PC-3 (cell line): ENCODE measurements at regions of chr2 and their contacts with region 1.

Region 1: DNA sequence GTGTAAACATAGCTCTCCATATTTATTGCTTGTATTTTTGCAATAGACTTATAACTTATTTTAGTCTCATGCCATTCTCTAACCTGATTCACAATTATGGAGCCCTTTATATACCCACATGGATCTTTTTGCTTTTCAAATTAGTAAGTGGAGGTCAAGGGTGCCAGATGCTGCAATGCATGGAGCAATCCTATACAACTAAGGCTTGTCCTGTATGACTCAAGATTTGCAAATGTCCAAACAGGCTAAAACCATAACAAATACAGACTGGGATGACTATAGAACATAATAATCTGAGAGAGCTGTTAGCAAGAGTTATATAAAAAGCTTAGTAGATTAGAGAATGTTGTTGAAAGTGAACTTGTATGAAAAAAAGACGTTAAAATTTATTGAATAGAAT is 690.4 kb upstream of the NRXN1 start:
- DNase-seq: peak; percentile 58
- ATAC-seq: peak; percentile 60
- H3K4me3 ChIP-seq: no peak overlapping the region
- H3K27ac ChIP-seq: 0 out of 2 replicates have a peak overlapping the region, but pooled peaks have one; percentile 5
- H3K4me1 ChIP-seq: peaks cover 16% of the 10 kb centered on the region; the same call in 1 of the 2 replicates
- H3K27me3 ChIP-seq: no peaks in the 10 kb centered on the region
- CTCF ChIP-seq: no peak

Region 2: DNA sequence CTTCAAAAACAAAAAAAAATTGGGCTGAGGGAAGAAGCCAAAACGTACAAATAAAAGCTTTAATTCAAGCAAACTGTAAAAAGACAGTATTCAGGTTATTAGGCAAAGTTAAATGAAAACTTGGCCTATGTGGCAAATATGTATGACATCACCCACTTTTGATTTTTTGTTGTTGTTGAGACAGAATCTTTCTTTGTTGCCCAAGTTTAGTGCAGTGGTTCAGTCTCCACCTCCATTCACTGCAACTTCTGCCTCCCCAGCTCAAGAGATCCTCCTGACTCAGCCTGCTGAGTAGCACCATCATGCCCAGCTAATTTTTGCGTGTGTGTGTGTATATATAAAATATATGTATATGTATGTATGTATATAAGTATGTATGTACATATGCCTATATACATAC is 250.0 kb before region 1 on chr2:
- CTCF ChIA-PET with region 1: no interaction called
- POLR2A ChIA-PET with region 1: no interaction called
- intact Hi-C with region 1: no loop called
- DNase-seq: no peak
- ATAC-seq: no peak
- H3K4me3 ChIP-seq: no peak overlapping the region
- H3K27ac ChIP-seq: no peak overlapping the region
- H3K4me1 ChIP-seq: no peaks in the 10 kb centered on the region
- H3K27me3 ChIP-seq: no peaks in the 10 kb centered on the region
- CTCF ChIP-seq: no peak

Region 3: GRCh38 chr2:51667679-51668078 is 54.6 kb before region 1 on chr2:
- CTCF ChIA-PET with region 1: no interaction called
- POLR2A ChIA-PET with region 1: no interaction called
- intact Hi-C with region 1: no loop called
- DNase-seq: no peak
- ATAC-seq: no peak
- H3K4me3 ChIP-seq: no peak overlapping the region
- H3K27ac ChIP-seq: no peak overlapping the region
- H3K4me1 ChIP-seq: no peaks in the 10 kb centered on the region
- H3K27me3 ChIP-seq: no peaks in the 10 kb centered on the region
- CTCF ChIP-seq: no peak

Region 4: DNA sequence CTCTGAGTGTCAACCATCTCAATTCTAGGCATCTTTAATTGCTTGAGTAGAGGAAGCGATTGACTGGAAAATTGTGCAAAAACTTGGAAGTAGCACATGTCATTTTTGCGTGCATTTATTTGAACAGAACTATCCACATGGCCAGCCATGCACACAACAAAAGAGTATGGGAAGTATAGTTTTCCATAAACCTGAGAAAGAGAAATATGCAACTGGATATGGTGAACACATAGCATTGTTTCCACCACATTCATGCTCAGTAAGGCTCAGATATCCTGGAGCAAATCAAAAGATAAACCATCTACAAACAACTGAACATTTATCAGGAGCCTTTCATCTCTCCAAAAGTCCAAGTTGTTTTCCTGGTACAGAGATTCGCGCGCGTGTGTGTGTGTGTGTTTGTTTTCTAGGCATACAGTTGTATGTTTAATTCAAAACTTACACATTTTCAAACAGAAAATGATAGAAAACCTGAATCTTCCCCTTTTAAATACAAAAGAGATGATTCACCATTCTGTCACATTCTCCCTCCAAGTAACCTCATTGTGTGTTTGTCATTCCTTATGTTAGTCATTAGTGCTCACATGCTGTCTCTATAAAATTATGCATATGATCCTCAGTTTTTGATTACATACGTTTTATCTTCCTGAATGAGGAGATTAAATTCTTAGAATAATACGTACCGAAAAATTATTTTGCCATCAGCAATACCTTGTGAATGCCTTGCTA is 90.0 kb after region 1 on chr2:
- CTCF ChIA-PET with region 1: no interaction called
- POLR2A ChIA-PET with region 1: no interaction called
- intact Hi-C with region 1: loop called (anchors 2 kb)
- DNase-seq: peak; percentile 83
- ATAC-seq: peak; percentile 77
- H3K4me3 ChIP-seq: peak overlapping the region; percentile 61
- H3K27ac ChIP-seq: peak overlapping the region; percentile 92
- H3K4me1 ChIP-seq: peaks cover 28% of the 10 kb centered on the region
- H3K27me3 ChIP-seq: no peaks in the 10 kb centered on the region
- CTCF ChIP-seq: no peak